HepG2 (cell line): ENCODE measurements at regions of chr2 and their contacts with region 1.

Region 1: GRCh38 chr2:186503848-186504606 is 18.0 kb downstream of the ZC3H15 start:
- DNase-seq: peak; percentile 42
- ATAC-seq: peak; percentile 67
- H3K4me3 ChIP-seq: no peak overlapping the region
- H3K27ac ChIP-seq: no peak overlapping the region
- H3K4me1 ChIP-seq: no peaks in the 10 kb centered on the region
- H3K27me3 ChIP-seq: no peaks in the 10 kb centered on the region
- CTCF ChIP-seq: peak; percentile 61
- EP300 ChIP-seq: no peak
- POLR2A ChIP-seq: no peak
- RAD21 ChIP-seq: no peak; the same call in 1 of the 2 replicates

Region 2: GRCh38 chr2:186518945-186519344 is 14.9 kb after region 1 on chr2:
- CTCF ChIA-PET with region 1: no interaction called
- POLR2A ChIA-PET with region 1: no interaction called
- in situ Hi-C with region 1: no loop called
- intact Hi-C with region 1: no loop called
- DNase-seq: no peak
- ATAC-seq: no peak
- H3K4me3 ChIP-seq: no peak overlapping the region
- H3K27ac ChIP-seq: no peak overlapping the region
- H3K4me1 ChIP-seq: no peaks in the 10 kb centered on the region
- H3K27me3 ChIP-seq: no peaks in the 10 kb centered on the region
- CTCF ChIP-seq: no peak
- EP300 ChIP-seq: no peak
- POLR2A ChIP-seq: no peak
- RAD21 ChIP-seq: no peak

Region 3: GRCh38 chr2:186595219-186595618 is 91.2 kb after region 1 on chr2:
- CTCF ChIA-PET with region 1: no interaction called
- POLR2A ChIA-PET with region 1: interaction called, 8 read pairs
- in situ Hi-C with region 1: loop called (anchors 10 kb)
- intact Hi-C with region 1: loop called (anchors 2 kb)
- DNase-seq: peak; percentile 97
- ATAC-seq: peak; percentile 80
- H3K4me3 ChIP-seq: no peak overlapping the region; a peak in 1 of 6 replicates
- H3K27ac ChIP-seq: no peak overlapping the region
- H3K4me1 ChIP-seq: peaks cover 55% of the 10 kb centered on the region
- H3K27me3 ChIP-seq: no peaks in the 10 kb centered on the region; a peak in 1 of 5 replicates
- CTCF ChIP-seq: no peak
- EP300 ChIP-seq: peak in 1 of 2 experiments; percentile 86; a peak in 2 of 4 replicates
- POLR2A ChIP-seq: no peak
- RAD21 ChIP-seq: no peak

Region 4: GRCh38 chr2:186605041-186605440 is 101.0 kb after region 1 on chr2:
- CTCF ChIA-PET with region 1: no interaction called
- POLR2A ChIA-PET with region 1: no interaction called
- in situ Hi-C with region 1: loop called (anchors 10 kb)
- intact Hi-C with region 1: no loop called
- DNase-seq: no peak
- ATAC-seq: no peak
- H3K4me3 ChIP-seq: no peak overlapping the region
- H3K27ac ChIP-seq: no peak overlapping the region
- H3K4me1 ChIP-seq: no peaks in the 10 kb centered on the region
- H3K27me3 ChIP-seq: no peaks in the 10 kb centered on the region
- CTCF ChIP-seq: no peak
- EP300 ChIP-seq: no peak
- POLR2A ChIP-seq: no peak
- RAD21 ChIP-seq: no peak

Region 5: GRCh38 chr2:186617771-186618170 is 113.7 kb after region 1 on chr2:
- CTCF ChIA-PET with region 1: no interaction called
- POLR2A ChIA-PET with region 1: no interaction called
- in situ Hi-C with region 1: no loop called
- intact Hi-C with region 1: no loop called
- DNase-seq: no peak
- ATAC-seq: no peak
- H3K4me3 ChIP-seq: no peak overlapping the region
- H3K27ac ChIP-seq: no peak overlapping the region
- H3K4me1 ChIP-seq: no peaks in the 10 kb centered on the region
- H3K27me3 ChIP-seq: no peaks in the 10 kb centered on the region
- CTCF ChIP-seq: no peak
- EP300 ChIP-seq: no peak
- POLR2A ChIP-seq: no peak
- RAD21 ChIP-seq: no peak

Region 6: DNA sequence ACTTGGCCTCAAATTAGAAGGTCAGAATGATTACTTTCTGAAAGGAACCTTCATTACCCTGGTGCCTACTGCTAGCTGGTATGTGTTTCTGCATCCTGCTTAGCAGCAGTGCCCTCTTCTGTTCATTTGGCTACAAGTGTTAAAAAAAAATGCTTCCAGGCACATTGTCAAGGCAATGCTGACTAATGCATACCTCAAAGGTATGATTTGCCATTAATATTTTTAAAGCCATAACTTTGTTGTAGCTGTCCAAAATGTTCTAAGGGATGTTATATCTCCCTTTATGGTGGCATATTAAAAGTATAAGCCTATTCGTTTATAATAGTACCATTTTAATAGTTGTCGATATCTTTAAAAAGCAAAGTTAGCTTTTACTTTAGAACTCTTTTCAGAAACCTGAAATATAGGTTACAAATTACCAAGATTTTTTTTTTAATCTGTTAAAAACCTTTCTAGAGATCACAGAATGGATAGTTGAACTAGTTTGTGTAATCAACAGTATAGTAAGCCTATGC is 137.8 kb after region 1 on chr2:
- CTCF ChIA-PET with region 1: interaction called, 57 read pairs
- POLR2A ChIA-PET with region 1: no interaction called
- in situ Hi-C with region 1: loop called (anchors 5 kb)
- intact Hi-C with region 1: loop called (anchors 1 kb)
- DNase-seq: peak; percentile 75
- ATAC-seq: peak; percentile 98
- H3K4me3 ChIP-seq: no peak overlapping the region
- H3K27ac ChIP-seq: no peak overlapping the region
- H3K4me1 ChIP-seq: no peaks in the 10 kb centered on the region
- H3K27me3 ChIP-seq: no peaks in the 10 kb centered on the region
- CTCF ChIP-seq: peak; percentile 88
- EP300 ChIP-seq: no peak
- POLR2A ChIP-seq: no peak
- RAD21 ChIP-seq: peak; percentile 88

Region 7: DNA sequence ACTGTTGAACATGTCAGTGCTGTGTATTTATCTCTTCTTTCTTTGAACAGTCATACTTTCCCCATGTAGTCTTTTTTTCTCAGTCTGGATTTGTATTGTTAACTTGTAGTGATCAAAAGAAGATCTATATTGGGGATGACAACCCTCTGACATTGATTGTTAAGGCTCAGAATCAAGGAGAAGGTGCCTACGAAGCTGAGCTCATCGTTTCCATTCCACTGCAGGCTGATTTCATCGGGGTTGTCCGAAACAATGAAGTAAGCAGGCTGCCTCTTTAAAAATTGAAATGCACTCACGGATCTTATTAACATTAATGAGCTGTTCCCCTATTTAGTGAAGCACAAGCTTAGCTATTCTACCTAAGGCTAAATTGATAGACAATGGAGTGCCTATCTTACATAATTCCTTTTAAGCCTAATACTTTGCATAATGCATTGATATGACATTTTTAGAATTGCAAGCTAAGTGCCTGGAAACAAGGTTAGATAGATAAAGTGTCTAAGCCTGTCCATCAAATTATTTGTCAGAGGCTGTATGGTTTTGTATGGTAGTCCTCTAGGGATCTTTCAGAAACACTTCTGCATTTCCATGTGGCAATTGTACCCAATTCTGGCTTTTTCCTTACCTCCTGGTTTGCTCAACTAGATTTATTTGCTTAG is 160.5 kb after region 1 on chr2:
- CTCF ChIA-PET with region 1: no interaction called
- POLR2A ChIA-PET with region 1: no interaction called
- in situ Hi-C with region 1: no loop called
- intact Hi-C with region 1: no loop called
- DNase-seq: no peak
- ATAC-seq: no peak
- H3K4me3 ChIP-seq: no peak overlapping the region
- H3K27ac ChIP-seq: no peak overlapping the region
- H3K4me1 ChIP-seq: no peaks in the 10 kb centered on the region
- H3K27me3 ChIP-seq: no peaks in the 10 kb centered on the region
- CTCF ChIP-seq: no peak
- EP300 ChIP-seq: no peak
- POLR2A ChIP-seq: no peak
- RAD21 ChIP-seq: no peak